BJ (cell line): ENCODE measurements at regions of chr11 and their contacts with region 1.

Region 1: DNA sequence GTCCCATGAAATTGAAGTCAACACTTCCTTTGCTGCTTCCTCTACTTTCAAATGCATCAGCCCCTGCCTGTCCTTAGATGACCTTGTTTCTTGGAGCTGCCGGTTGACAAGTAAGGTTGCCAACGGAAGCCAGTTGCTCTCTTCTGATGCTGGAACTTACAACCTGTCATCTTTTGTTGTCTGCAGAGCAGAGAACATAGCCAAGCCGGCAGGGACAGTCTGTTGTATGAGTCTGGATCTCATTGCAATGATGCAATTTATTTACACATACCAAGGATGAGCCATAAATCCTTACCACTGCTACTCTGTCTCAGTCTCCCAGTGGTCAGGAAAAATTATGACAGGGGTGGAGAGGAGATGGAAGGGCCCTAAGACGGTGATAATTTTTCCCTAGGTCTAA is 151.4 kb downstream of the BLID start:
- DNase-seq: peak; percentile 23
- H3K4me3 ChIP-seq: no peak overlapping the region
- H3K27me3 ChIP-seq: no peaks in the 10 kb centered on the region
- CTCF ChIP-seq: peak; percentile 19; the same call in 1 of the 2 replicates

Region 2: DNA sequence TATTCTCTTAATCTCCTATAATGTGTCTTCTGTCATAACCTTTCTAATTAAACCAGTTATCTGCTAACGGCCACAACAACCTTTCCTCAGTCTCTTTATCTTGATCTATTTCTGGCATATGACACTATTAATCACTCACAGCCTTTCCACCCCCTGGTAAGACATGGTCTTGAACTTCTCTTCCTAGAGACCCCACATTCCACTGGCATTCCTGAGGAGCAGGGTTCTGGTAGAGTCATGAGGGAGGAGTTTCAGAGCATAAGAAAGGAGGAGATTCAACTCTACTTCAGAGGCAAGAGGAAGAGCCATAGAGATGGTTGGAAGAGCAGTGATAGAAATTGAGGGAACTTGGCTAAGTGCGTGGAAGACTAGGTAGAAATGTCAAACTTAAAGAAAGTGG is 174.2 kb before region 1 on chr11:
- CTCF ChIA-PET with region 1: no interaction called
- POLR2A ChIA-PET with region 1: interaction called, 17 read pairs
- DNase-seq: no peak
- H3K4me3 ChIP-seq: no peak overlapping the region
- H3K27me3 ChIP-seq: no peaks in the 10 kb centered on the region; the same call in 1 of the 2 replicates
- CTCF ChIP-seq: no peak

Region 3: DNA sequence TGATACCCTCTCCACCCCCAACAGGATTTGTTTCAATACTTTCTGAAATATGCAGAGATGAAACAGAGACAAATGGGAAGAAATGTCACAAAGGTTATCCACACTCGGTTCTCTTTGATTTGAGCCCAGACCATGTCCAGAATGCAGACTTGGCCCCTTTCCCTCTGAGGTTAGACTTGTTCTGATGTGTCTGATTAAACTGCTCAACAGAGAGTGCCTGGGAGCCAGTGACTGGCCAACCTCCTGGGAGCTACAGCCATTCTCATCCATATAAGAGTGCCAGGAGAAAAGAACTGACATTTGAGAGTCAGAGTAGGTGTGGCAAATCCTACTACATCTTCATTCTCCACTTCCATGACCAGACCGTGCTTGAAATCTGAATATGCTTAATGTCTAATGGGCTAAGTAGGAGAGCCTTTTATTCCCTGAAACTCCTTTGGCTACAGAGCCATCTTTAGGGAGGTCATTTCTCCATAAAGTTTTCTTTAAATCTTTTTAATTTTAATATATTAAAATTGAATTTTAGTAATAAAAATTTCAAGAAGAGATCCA is 50.0 kb before region 1 on chr11:
- CTCF ChIA-PET with region 1: no interaction called
- POLR2A ChIA-PET with region 1: no interaction called
- DNase-seq: no peak
- H3K4me3 ChIP-seq: no peak overlapping the region
- H3K27me3 ChIP-seq: no peaks in the 10 kb centered on the region
- CTCF ChIP-seq: no peak

Region 4: GRCh38 chr11:121936781-121937447 is 27.7 kb before region 1 on chr11:
- CTCF ChIA-PET with region 1: no interaction called
- POLR2A ChIA-PET with region 1: no interaction called
- DNase-seq: peak; percentile 39
- H3K4me3 ChIP-seq: no peak overlapping the region
- H3K27me3 ChIP-seq: no peaks in the 10 kb centered on the region
- CTCF ChIP-seq: no peak